ENCODE measurements at regions of chr18 and their contacts with region 1.

Region 1: GRCh38 chr18:23967321-23968089 is 47.0 kb upstream of the TTC39C start:
- DNase-seq: peak; percentile 63
- H3K4me3 Mint-ChIP-seq: no peak overlapping the region
- H3K27ac Mint-ChIP-seq: no peak overlapping the region
- H3K4me1 Mint-ChIP-seq: peaks cover 82% of the 10 kb centered on the region
- H3K27me3 Mint-ChIP-seq: no peaks in the 10 kb centered on the region

Region 2: GRCh38 chr18:23523429-23524220 is 443.9 kb before region 1 on chr18:
- CTCF ChIA-PET with region 1: no interaction called
- POLR2A ChIA-PET with region 1: no interaction called
- intact Hi-C with region 1: no loop called
- DNase-seq: no peak
- H3K4me3 Mint-ChIP-seq: no peak overlapping the region
- H3K27ac Mint-ChIP-seq: peak overlapping the region; percentile 70
- H3K4me1 Mint-ChIP-seq: peaks cover 8% of the 10 kb centered on the region
- H3K27me3 Mint-ChIP-seq: no peaks in the 10 kb centered on the region

Region 3: DNA sequence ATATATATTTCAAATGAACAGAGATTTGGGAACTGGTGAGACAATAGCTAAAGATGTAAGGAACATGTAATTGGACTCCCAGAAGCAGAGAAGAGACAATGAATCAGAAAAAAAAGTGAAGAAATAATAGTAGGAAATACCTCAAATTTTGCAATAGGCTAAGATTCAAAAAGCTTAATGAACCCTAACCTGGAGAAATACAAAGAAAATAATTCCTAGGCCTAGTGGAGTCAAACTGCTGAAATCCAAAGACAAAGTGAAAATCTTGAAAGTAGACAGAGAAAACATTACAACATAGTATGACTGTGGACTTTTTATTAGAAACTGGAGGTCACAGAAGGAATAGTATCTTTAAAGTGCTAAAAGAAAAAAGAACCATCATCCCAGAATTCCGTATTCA is 201.6 kb before region 1 on chr18:
- CTCF ChIA-PET with region 1: no interaction called
- POLR2A ChIA-PET with region 1: no interaction called
- intact Hi-C with region 1: no loop called
- DNase-seq: no peak
- H3K4me3 Mint-ChIP-seq: no peak overlapping the region
- H3K27ac Mint-ChIP-seq: no peak overlapping the region
- H3K4me1 Mint-ChIP-seq: no peaks in the 10 kb centered on the region
- H3K27me3 Mint-ChIP-seq: peaks cover 1% of the 10 kb centered on the region

Region 4: DNA sequence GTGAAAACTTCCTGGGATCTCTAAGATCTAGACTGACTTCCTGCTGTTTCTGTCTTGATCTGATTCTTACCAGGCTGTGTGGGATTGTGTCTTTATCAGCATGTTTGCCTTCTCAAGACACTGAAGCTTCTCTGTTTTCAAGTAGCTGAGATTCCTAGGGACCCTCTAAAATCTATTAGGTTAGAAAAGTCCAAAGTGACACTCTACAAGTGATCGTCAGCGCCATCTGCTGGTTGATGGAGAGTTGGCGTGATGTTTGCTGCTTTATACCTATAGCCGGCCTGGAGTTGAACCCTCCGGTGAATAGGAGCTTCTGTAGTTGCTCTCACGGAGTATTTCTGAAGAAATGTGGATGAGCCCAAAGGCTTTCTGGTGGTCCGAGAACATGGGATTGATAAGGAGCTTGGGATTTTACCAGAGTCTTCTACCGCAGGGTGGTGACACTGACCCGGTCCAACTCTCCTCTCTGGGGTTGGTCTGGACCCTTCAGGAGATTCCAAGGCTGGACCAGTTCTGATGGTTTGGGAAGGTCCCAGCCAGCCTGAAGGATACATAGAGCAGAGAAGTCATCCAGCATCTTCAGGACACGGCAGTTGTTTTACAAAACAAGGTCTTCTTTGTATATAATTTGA is 49.0 kb before region 1 on chr18:
- CTCF ChIA-PET with region 1: interaction called, 10 read pairs
- POLR2A ChIA-PET with region 1: no interaction called
- intact Hi-C with region 1: loop called (anchors 10 kb)
- DNase-seq: peak; percentile 83
- H3K4me3 Mint-ChIP-seq: no peak overlapping the region
- H3K27ac Mint-ChIP-seq: no peak overlapping the region
- H3K4me1 Mint-ChIP-seq: peaks cover 16% of the 10 kb centered on the region
- H3K27me3 Mint-ChIP-seq: no peaks in the 10 kb centered on the region

Region 5: GRCh38 chr18:23943104-23943503 is 24.4 kb before region 1 on chr18:
- CTCF ChIA-PET with region 1: interaction called, 4 read pairs
- POLR2A ChIA-PET with region 1: no interaction called
- intact Hi-C with region 1: loop called (anchors 1 kb)
- DNase-seq: peak; percentile 78
- H3K4me3 Mint-ChIP-seq: peak overlapping the region; percentile 13
- H3K27ac Mint-ChIP-seq: no peak overlapping the region
- H3K4me1 Mint-ChIP-seq: peaks cover 36% of the 10 kb centered on the region
- H3K27me3 Mint-ChIP-seq: peaks cover 8% of the 10 kb centered on the region

Region 6: GRCh38 chr18:23977719-23978483 is 10.4 kb after region 1 on chr18:
- CTCF ChIA-PET with region 1: no interaction called
- POLR2A ChIA-PET with region 1: no interaction called
- intact Hi-C with region 1: no loop called
- DNase-seq: no peak
- H3K4me3 Mint-ChIP-seq: no peak overlapping the region
- H3K27ac Mint-ChIP-seq: peak overlapping the region; percentile 55
- H3K4me1 Mint-ChIP-seq: peaks cover 62% of the 10 kb centered on the region
- H3K27me3 Mint-ChIP-seq: peaks cover 5% of the 10 kb centered on the region

Region 7: GRCh38 chr18:23994361-23994902 is 26.9 kb after region 1 on chr18:
- CTCF ChIA-PET with region 1: interaction called, 4 read pairs
- POLR2A ChIA-PET with region 1: no interaction called
- intact Hi-C with region 1: loop called (anchors 1 kb)
- DNase-seq: peak; percentile 64
- H3K4me3 Mint-ChIP-seq: peak overlapping the region; percentile 76
- H3K27ac Mint-ChIP-seq: peak overlapping the region; percentile 86
- H3K4me1 Mint-ChIP-seq: peaks cover 73% of the 10 kb centered on the region
- H3K27me3 Mint-ChIP-seq: no peaks in the 10 kb centered on the region

Region 8: GRCh38 chr18:24014062-24014985 is 46.8 kb after region 1 on chr18 and contains the start of gene TTC39C:
- CTCF ChIA-PET with region 1: interaction called, 4 read pairs
- POLR2A ChIA-PET with region 1: interaction called, 3 read pairs
- intact Hi-C with region 1: loop called (anchors 1 kb)
- DNase-seq: peak; percentile 93
- H3K4me3 Mint-ChIP-seq: peak within 1 kb of the TSS; percentile 89
- H3K27ac Mint-ChIP-seq: peak within 1 kb of the TSS; percentile 89
- H3K4me1 Mint-ChIP-seq: peaks cover 71% of the 10 kb centered on the region
- H3K27me3 Mint-ChIP-seq: no peaks in the 10 kb centered on the region
- total RNA-seq, gene TTC39C: 48.9 to 49.0 TPM

Region 9: DNA sequence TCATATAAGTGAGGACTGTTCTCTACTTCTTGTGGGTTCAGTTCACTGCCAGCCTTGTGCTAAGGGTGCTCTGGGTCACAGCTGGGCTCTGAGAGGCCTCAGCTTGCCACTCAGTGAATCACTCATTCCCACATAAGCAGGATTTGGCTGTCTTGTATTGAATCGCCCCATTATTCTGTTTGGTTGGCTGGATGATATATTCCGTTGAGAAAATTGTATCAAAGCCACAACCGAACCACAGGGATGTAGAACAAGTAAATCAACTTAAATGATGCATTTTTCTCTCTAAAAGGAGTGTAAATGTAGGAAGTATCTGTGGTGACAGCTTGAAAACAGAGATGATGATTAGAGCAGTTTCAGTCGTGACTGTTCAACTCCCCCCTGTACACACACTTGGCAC is 86.6 kb after region 1 on chr18:
- CTCF ChIA-PET with region 1: interaction called, 4 read pairs
- POLR2A ChIA-PET with region 1: no interaction called
- intact Hi-C with region 1: loop called (anchors 2 kb)
- DNase-seq: peak; percentile 60
- H3K4me3 Mint-ChIP-seq: no peak overlapping the region
- H3K27ac Mint-ChIP-seq: peak overlapping the region; percentile 20
- H3K4me1 Mint-ChIP-seq: peaks cover 80% of the 10 kb centered on the region
- H3K27me3 Mint-ChIP-seq: no peaks in the 10 kb centered on the region

Region 10: GRCh38 chr18:24118750-24119577 is 151.5 kb after region 1 on chr18:
- CTCF ChIA-PET with region 1: interaction called, 4 read pairs
- POLR2A ChIA-PET with region 1: no interaction called
- intact Hi-C with region 1: loop called (anchors 1 kb)
- DNase-seq: peak; percentile 85
- H3K4me3 Mint-ChIP-seq: no peak overlapping the region
- H3K27ac Mint-ChIP-seq: peak overlapping the region; percentile 49
- H3K4me1 Mint-ChIP-seq: peaks cover 26% of the 10 kb centered on the region
- H3K27me3 Mint-ChIP-seq: no peaks in the 10 kb centered on the region

Measured in activated CD4-positive, alpha-beta memory T cell treated with anti-CD3 and anti-CD28 coated beads for 36 hours (primary cell).